Natural killer cell (primary cell): ENCODE measurements at regions of chr20 and their contacts with region 1.

Region 1: DNA sequence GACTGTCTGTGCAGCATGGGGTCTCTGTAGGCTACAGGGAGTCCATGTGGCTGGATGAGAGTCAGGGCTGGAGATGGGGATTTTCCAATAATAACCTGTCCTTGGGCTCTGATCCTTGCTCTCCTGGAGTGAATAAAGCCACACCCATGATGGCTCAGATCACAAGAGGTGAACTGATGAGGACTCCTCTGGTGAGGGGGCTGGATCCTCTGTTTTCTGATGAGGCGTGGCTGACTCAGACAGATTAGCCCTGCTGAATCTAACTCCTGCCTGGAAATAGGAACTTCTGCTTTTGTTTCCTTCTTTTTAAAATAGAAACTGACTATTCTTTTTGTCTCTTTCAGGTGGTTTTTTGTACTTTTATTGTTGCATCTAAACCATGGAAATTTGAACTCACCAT is 27.0 kb downstream of the CST9L start:
- DNase-seq: no peak
- ATAC-seq: no peak
- H3K4me3 ChIP-seq: no peak overlapping the region
- H3K4me3 Mint-ChIP-seq: no peak overlapping the region
- H3K27ac ChIP-seq: no peak overlapping the region
- H3K27ac Mint-ChIP-seq: no peak overlapping the region
- H3K4me1 ChIP-seq: no peaks in the 10 kb centered on the region
- H3K4me1 Mint-ChIP-seq: no peaks in the 10 kb centered on the region
- H3K27me3 ChIP-seq: no peaks in the 10 kb centered on the region
- H3K27me3 Mint-ChIP-seq: peaks cover 0 to 3% of the 10 kb centered on the region in 2 donors
- CTCF ChIP-seq: no peak

Region 2: DNA sequence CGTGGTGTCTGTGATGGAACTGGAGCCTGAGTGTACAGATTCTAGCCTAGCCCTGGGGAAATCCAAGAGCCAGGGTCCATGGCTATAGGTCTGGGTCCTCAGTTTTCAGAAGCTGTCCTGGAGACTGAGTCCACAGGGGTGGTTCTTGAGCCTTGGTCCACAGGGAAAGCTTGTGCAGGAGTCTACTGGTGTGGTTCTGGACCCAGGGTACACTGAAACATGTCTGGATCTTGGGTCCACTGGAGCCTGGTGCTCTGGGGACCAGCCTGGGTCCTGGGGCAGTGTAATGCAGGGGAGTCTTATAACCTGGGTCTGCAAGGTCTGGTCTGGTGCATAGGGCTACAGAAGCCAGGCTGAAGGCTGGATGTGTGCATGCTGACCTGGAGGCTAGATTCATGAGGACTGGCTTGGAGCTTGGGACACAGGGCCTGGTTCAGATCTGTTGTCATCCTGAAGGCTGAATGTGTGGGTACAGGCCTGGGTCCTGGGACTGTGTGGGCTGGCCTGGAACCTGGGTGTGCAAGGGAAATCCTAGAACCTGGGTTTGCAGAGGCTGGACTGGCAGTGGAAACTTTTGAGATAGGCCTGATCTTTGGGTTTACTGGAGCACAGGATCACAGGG is 21.5 kb after region 1 on chr20:
- intact Hi-C with region 1: no loop called
- DNase-seq: no peak
- ATAC-seq: no peak
- H3K4me3 ChIP-seq: no peak overlapping the region
- H3K4me3 Mint-ChIP-seq: no peak overlapping the region
- H3K27ac ChIP-seq: no peak overlapping the region
- H3K27ac Mint-ChIP-seq: no peak overlapping the region
- H3K4me1 ChIP-seq: no peaks in the 10 kb centered on the region
- H3K4me1 Mint-ChIP-seq: peaks cover 0 to 5% of the 10 kb centered on the region in 2 donors
- H3K27me3 ChIP-seq: no peaks in the 10 kb centered on the region
- H3K27me3 Mint-ChIP-seq: peaks cover 2 to 9% of the 10 kb centered on the region in 2 donors
- CTCF ChIP-seq: no peak

Region 3: DNA sequence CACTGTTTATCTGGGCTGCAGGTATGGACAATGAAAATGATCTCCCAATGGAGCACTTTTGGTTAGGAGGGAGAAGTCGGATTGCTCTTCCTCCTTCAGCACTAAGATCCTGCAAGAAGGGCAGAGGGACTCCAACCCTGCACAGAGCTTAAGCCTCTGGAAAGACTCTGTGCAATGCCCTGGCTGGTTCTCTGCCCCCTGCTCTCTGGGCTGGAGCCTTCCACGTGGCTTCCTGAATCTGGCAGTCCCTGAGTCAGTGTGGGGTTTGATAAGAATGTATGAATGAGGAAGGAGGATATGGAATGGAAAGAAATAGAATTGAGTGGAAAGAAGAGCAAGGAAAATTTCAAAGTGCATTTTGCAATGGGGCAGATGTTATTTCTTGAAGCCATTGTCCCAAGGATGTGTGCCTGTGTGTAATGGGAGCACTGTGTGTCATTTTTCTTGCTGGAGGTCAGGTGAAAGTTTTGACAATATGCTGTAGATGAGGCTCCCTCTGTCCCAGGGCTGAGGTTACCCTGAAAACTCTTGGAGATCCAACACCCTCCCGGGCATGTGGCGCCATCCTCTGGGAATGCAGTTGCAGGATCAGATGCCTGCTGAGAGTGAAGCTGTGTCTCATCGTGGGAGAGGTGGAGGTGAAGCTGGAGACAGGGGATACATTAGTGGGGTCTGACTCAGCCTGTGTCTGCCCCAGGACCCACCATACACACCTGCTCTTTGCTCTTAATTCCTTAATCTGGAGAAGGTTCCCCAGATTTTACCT is 43.3 kb after region 1 on chr20:
- intact Hi-C with region 1: loop called (anchors 5 kb)
- DNase-seq: no peak
- ATAC-seq: no peak
- H3K4me3 ChIP-seq: no peak overlapping the region
- H3K4me3 Mint-ChIP-seq: no peak overlapping the region
- H3K27ac ChIP-seq: no peak overlapping the region
- H3K27ac Mint-ChIP-seq: no peak overlapping the region
- H3K4me1 ChIP-seq: peaks cover 4% of the 10 kb centered on the region
- H3K4me1 Mint-ChIP-seq: peaks cover 6 to 8% of the 10 kb centered on the region in 2 donors
- H3K27me3 ChIP-seq: peaks cover 3% of the 10 kb centered on the region
- H3K27me3 Mint-ChIP-seq: peaks cover 20 to 22% of the 10 kb centered on the region in 2 donors
- CTCF ChIP-seq: no peak